ENCODE measurements at regions of chr2 and their contacts with region 1.

Region 1: DNA sequence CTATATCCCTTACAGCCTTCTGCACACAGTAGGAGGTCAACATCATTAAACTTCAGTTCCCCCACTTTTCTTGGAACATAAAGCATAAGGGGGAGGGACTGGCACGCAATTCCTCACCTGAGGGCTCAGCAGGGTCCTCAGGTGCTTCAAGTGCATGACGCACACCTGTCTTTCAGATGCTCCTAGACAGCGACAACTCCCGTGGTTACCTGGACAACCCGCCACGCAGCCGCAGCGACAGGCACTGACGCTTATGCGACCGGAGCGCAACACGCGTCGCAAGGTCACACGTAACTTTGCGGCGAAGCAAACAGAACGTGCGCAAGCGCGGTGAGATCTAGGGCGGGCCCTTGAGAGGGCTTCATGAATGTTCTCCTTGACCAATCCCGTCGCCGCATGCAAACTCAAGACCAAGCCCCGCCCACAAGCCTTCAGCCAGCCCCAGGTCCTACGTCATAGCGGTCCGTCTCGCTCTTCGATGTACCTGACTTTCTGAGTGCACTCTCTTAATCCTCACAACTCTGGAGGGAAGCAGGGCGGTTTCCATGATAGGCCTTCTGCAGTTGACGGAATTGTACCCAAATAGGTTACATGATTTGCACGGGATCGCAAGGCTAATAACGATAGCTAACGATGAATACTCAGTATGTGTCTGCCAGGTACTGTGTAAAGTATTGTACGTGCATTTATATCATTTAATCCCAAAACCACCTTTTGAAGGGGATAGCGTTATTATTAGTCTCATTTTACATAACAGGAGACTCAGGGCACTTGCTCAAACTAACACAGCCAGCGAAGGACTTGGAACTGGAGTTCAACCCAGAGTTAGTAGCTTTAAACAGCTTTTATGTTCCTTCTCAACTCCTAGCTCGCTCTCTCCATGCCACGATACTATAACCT is at the start of gene IFT172:
- DNase-seq: peak; percentile 90 to 100 (median 99)
- ATAC-seq: peak; percentile 96
- H3K4me3 ChIP-seq: peak within 1 kb of the TSS; percentile 63
- H3K4me3 Mint-ChIP-seq: peak within 1 kb of the TSS; percentile 78 to 92 (median 84)
- H3K27ac ChIP-seq: peak within 1 kb of the TSS; percentile 80
- H3K27ac Mint-ChIP-seq: peak within 1 kb of the TSS; percentile 82 to 99 (median 98)
- H3K4me1 ChIP-seq: peaks cover 11 to 16% of the 10 kb centered on the region in 2 donors
- H3K4me1 Mint-ChIP-seq: peaks cover 8 to 29% (median 19%) of the 10 kb centered on the region in 7 donors
- H3K27me3 ChIP-seq: peaks cover 0 to 7% of the 10 kb centered on the region in 2 donors
- H3K27me3 Mint-ChIP-seq: peaks cover 13 to 20% (median 17%) of the 10 kb centered on the region in 5 donors
- total RNA-seq, gene IFT172: 12.3 to 35.8 (median 22.2) TPM

Region 2: GRCh38 chr2:27211829-27212627 is 277.7 kb before region 1 on chr2 and contains the starts of genes ATRAID and SLC5A6:
- CTCF ChIA-PET with region 1: no interaction called
- POLR2A ChIA-PET with region 1: no interaction called
- intact Hi-C with region 1: loop called in 1 of 2 experiments (anchors 5 kb)
- DNase-seq: peak; percentile 86 to 93 (median 92)
- ATAC-seq: peak; percentile 93
- H3K4me3 ChIP-seq: peak within 1 kb of the TSS; percentile 91
- H3K4me3 Mint-ChIP-seq: peak within 1 kb of the TSS; percentile 89 to 100 (median 99)
- H3K27ac ChIP-seq: peak within 1 kb of the TSS; percentile 100
- H3K27ac Mint-ChIP-seq: peak within 1 kb of the TSS; percentile 99 to 100 (median 100)
- H3K4me1 ChIP-seq: peaks cover 14 to 17% of the 10 kb centered on the region in 2 donors
- H3K4me1 Mint-ChIP-seq: peaks cover 18 to 49% (median 42%) of the 10 kb centered on the region in 7 donors
- H3K27me3 ChIP-seq: no peaks in the 10 kb centered on the region
- H3K27me3 Mint-ChIP-seq: no peaks in the 10 kb centered on the region
- total RNA-seq, gene ATRAID: 71.0 to 113 (median 90.7) TPM
- total RNA-seq, gene SLC5A6: 25.6 to 203 (median 44.3) TPM

Region 3: GRCh38 chr2:27356382-27357181 is 133.2 kb before region 1 on chr2 and contains the start of gene GTF3C2:
- CTCF ChIA-PET with region 1: no interaction called
- POLR2A ChIA-PET with region 1: no interaction called
- intact Hi-C with region 1: loop called (anchors 1 to 5 kb)
- DNase-seq: peak; percentile 76 to 94 (median 92)
- ATAC-seq: peak; percentile 85
- H3K4me3 ChIP-seq: peak within 1 kb of the TSS; percentile 96
- H3K4me3 Mint-ChIP-seq: peak within 1 kb of the TSS; percentile 95 to 100 (median 98)
- H3K27ac ChIP-seq: peak within 1 kb of the TSS; percentile 91
- H3K27ac Mint-ChIP-seq: peak within 1 kb of the TSS; percentile 96 to 100 (median 99)
- H3K4me1 ChIP-seq: peaks cover 24 to 34% of the 10 kb centered on the region in 2 donors
- H3K4me1 Mint-ChIP-seq: peaks cover 38 to 63% (median 56%) of the 10 kb centered on the region in 7 donors
- H3K27me3 ChIP-seq: no peaks in the 10 kb centered on the region
- H3K27me3 Mint-ChIP-seq: no peaks in the 10 kb centered on the region
- total RNA-seq, gene GTF3C2: 68.0 to 106 (median 78.3) TPM

Region 4: DNA sequence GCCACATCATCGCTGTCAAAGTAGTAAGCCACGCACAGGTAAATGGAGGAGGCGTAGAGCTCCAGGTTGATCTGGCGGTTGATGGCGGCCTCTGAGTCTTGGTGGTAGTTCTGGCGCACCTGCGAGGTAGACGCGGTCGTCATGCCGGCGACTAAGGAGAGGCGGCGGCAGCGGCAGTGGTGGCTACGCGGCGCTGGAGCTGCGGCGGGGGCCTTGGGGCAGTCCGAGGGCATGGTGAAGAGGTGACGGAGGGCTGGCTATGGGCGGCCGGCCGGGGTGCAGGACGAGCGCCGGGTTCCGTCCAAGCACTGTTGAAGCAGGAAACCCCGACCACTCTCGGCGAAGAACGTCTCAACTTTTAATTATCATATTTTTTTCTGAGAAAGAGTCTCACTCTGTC is 96.5 kb before region 1 on chr2:
- CTCF ChIA-PET with region 1: no interaction called
- POLR2A ChIA-PET with region 1: no interaction called
- intact Hi-C with region 1: no loop called
- DNase-seq: no peak
- ATAC-seq: no peak
- H3K4me3 ChIP-seq: no peak overlapping the region
- H3K4me3 Mint-ChIP-seq: peak overlapping the region in 2 of 10 donors; percentile 20 to 33
- H3K27ac ChIP-seq: no peak overlapping the region
- H3K27ac Mint-ChIP-seq: peak overlapping the region in 6 of 9 donors; percentile 21 to 67 (median 54)
- H3K4me1 ChIP-seq: peaks cover 10 to 16% of the 10 kb centered on the region in 2 donors
- H3K4me1 Mint-ChIP-seq: peaks cover 32 to 52% (median 35%) of the 10 kb centered on the region in 7 donors
- H3K27me3 ChIP-seq: no peaks in the 10 kb centered on the region
- H3K27me3 Mint-ChIP-seq: no peaks in the 10 kb centered on the region

Region 5: GRCh38 chr2:27582695-27583389 is 93.1 kb after region 1 on chr2 and contains the start of gene ZNF512:
- CTCF ChIA-PET with region 1: no interaction called
- POLR2A ChIA-PET with region 1: interaction called, 4 read pairs
- intact Hi-C with region 1: loop called (anchors 1 to 2 kb)
- DNase-seq: peak; percentile 44 to 76 (median 70)
- ATAC-seq: peak; percentile 92
- H3K4me3 ChIP-seq: peak within 1 kb of the TSS; percentile 75
- H3K4me3 Mint-ChIP-seq: peak within 1 kb of the TSS; percentile 90 to 100 (median 95)
- H3K27ac ChIP-seq: peak within 1 kb of the TSS; percentile 84
- H3K27ac Mint-ChIP-seq: peak within 1 kb of the TSS; percentile 85 to 98 (median 94)
- H3K4me1 ChIP-seq: peaks cover 22 to 35% of the 10 kb centered on the region in 2 donors
- H3K4me1 Mint-ChIP-seq: peaks cover 37 to 60% (median 53%) of the 10 kb centered on the region in 7 donors
- H3K27me3 ChIP-seq: no peaks in the 10 kb centered on the region
- H3K27me3 Mint-ChIP-seq: peaks cover 0 to 16% (median 0%) of the 10 kb centered on the region in 5 donors
- total RNA-seq, gene ZNF512: 26.6 to 64.6 (median 50.1) TPM

Region 6: DNA sequence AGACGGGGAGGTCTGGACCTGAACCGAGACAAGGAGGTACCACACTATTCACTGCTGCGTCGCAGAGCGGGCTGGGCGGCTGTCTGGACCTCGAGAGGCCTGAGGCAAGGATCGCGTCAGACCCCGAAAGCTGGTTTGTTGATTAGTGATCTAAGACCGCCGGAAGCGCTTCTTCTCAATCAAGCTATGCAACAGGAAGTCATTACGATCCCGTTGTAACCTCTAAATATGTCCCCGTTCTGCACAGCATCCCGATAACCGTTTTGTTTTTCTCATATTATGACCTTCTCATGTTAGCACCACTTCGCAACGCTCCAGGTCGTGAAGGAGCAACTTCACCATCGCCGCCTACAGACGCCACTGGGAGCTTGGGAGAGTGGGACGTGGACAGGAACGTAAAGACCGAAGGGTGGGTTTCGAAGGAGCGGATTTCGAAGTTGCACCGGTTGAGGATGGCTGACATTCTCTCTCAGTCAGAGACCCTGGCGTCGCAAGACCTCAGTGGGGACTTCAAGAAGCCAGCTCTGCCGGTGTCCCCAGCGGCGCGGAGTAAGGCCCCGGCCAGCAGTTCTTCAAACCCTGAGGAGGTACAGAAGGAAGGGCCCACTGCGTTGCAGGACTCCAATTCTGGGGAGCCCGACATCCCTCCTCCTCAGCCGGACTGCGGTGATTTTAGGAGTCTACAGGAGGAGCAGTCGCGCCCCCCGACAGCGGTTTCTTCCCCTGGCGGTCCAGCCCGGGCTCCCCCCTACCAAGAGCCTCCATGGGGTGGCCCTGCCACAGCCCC is 173.9 kb after region 1 on chr2 and contains the starts of genes SLC4A1AP and SUPT7L:
- CTCF ChIA-PET with region 1: no interaction called
- POLR2A ChIA-PET with region 1: interaction called, 3 read pairs
- intact Hi-C with region 1: loop called (anchors 1 kb)
- DNase-seq: peak; percentile 74 to 88 (median 82)
- ATAC-seq: peak; percentile 89
- H3K4me3 ChIP-seq: peak within 1 kb of the TSS; percentile 98
- H3K4me3 Mint-ChIP-seq: peak within 1 kb of the TSS; percentile 94 to 100 (median 100)
- H3K27ac ChIP-seq: peak within 1 kb of the TSS; percentile 95
- H3K27ac Mint-ChIP-seq: peak within 1 kb of the TSS; percentile 98 to 100 (median 99)
- H3K4me1 ChIP-seq: peaks cover 18 to 20% of the 10 kb centered on the region in 2 donors
- H3K4me1 Mint-ChIP-seq: peaks cover 35 to 75% (median 64%) of the 10 kb centered on the region in 7 donors
- H3K27me3 ChIP-seq: no peaks in the 10 kb centered on the region
- H3K27me3 Mint-ChIP-seq: no peaks in the 10 kb centered on the region
- total RNA-seq, gene SLC4A1AP: 14.7 to 27.0 (median 23.2) TPM
- total RNA-seq, gene SUPT7L: 37.9 to 58.6 (median 46.5) TPM

Region 7: DNA sequence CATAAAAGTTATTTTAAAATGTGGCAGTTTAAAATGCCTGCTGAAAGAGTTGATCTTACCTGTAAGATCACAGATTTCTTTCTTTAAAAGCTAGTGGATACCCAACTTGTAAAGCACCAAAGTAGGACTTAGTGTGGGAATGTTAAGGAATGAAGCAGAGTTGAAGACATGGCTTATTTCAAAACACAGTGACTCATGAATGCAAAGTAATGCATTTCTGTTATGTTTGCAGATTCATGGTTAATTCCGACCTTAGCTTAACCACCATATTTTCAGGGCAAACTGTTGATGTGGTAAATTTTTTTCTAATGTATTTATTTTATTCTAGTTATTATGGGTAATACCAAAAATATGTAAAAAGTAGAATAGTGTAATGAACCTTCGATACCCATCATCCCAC is 696.1 kb after region 1 on chr2:
- CTCF ChIA-PET with region 1: no interaction called
- POLR2A ChIA-PET with region 1: no interaction called
- intact Hi-C with region 1: no loop called
- DNase-seq: no peak
- ATAC-seq: no peak
- H3K4me3 ChIP-seq: no peak overlapping the region
- H3K4me3 Mint-ChIP-seq: no peak overlapping the region
- H3K27ac ChIP-seq: no peak overlapping the region
- H3K27ac Mint-ChIP-seq: no peak overlapping the region
- H3K4me1 ChIP-seq: no peaks in the 10 kb centered on the region
- H3K4me1 Mint-ChIP-seq: no peaks in the 10 kb centered on the region
- H3K27me3 ChIP-seq: no peaks in the 10 kb centered on the region
- H3K27me3 Mint-ChIP-seq: no peaks in the 10 kb centered on the region